ENCODE measurements at regions of chr9 and their contacts with region 1.

Region 1: GRCh38 chr9:3467593-3468219 is 58.1 kb downstream of the RFX3 start:
- DNase-seq: peak; percentile 70
- H3K4me3 Mint-ChIP-seq: no peak overlapping the region
- H3K27ac Mint-ChIP-seq: no peak overlapping the region
- H3K4me1 Mint-ChIP-seq: peaks cover 13% of the 10 kb centered on the region
- H3K27me3 Mint-ChIP-seq: no peaks in the 10 kb centered on the region

Region 2: DNA sequence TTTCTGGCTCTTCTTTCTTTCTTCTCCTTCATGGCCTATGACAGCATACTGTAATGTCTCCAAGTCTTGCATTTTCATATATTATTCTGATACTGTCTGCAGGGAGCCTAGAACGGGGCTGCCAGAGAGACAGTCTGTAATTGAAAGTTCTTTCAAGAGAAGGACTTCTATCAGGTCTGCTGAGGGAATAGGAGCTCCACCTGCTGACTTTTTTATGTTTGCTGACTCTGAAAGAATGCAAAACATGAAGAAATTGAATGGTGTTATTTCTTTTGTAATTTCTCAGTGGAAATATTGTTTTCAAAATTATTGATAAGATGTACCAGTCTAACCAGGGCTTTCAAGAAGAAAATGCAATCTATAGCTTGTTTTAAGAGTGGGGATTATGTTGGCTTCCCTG is 179.9 kb after region 1 on chr9:
- CTCF ChIA-PET with region 1: interaction called, 5 read pairs
- POLR2A ChIA-PET with region 1: no interaction called
- intact Hi-C with region 1: loop called (anchors 5 kb)
- DNase-seq: no peak
- H3K4me3 Mint-ChIP-seq: no peak overlapping the region
- H3K27ac Mint-ChIP-seq: no peak overlapping the region
- H3K4me1 Mint-ChIP-seq: no peaks in the 10 kb centered on the region
- H3K27me3 Mint-ChIP-seq: no peaks in the 10 kb centered on the region

Measured in activated CD4-positive, alpha-beta memory T cell treated with anti-CD3 and anti-CD28 coated beads for 36 hours (primary cell).